Common myeloid progenitor, CD34-positive (primary cell): ENCODE measurements at regions of chr16 and their contacts with region 1.

Region 1: DNA sequence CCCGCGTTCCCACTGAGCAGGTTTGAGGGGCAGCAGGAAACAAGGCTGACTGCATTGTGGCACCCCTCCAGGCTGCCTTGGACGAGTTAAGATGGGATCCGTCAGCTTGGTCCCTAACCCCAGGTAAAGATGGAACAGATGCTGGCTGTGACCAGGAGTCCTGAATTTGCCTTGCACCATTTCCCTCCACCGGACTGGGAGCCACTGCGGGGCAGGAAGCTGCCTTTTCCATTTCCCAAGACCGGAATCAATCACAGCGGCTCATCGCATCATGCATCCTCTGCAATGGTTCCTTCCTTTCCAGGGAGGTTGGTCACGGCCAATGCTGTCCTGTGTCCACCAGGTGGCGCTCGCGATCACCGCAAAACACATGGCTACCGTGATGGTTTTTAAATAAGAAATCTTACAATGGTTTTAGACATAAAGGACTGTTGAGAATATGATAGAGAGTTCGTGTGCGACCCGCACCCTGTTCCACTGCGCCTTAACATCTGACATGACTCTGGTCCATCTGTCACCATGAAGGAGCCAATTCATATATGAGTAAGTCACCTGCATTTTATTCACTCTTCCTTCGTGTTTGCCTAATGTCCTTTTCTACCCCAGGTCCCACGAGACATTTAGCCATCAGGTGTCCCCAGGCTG is 6.8 kb upstream of the MEAK7 start:
- DNase-seq: peak; percentile 76 to 90 (median 83)
- H3K4me3 ChIP-seq: no peak overlapping the region
- H3K27ac ChIP-seq: no peak overlapping the region
- H3K4me1 ChIP-seq: peaks cover 0 to 15% (median 10%) of the 10 kb centered on the region in 4 experiments
- H3K27me3 ChIP-seq: no peaks in the 10 kb centered on the region

Region 2: DNA sequence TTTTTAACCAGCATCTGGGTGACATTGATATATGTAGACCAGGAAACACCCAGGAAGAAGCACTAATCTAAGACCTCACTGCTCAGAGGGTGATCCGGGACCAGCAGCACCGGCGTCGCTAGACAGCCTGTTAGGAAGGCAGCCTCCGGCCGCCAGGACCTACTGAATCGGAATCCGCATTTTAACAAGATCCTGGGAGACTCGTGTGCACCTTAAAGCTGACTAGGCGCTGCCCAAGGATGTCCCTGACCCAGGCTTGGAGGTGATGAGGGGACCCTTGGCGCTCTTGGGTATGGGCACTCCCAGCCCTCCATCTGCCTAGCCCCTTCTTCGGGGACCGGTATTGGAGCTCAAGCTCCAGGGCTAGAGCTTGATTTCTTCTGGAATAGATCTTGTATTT is 11.2 kb after region 1 on chr16:
- CTCF ChIA-PET with region 1: interaction called, 10 read pairs
- POLR2A ChIA-PET with region 1: no interaction called
- DNase-seq: no peak
- H3K4me3 ChIP-seq: no peak overlapping the region
- H3K27ac ChIP-seq: no peak overlapping the region
- H3K4me1 ChIP-seq: peaks cover 2 to 10% (median 6%) of the 10 kb centered on the region in 4 experiments
- H3K27me3 ChIP-seq: no peaks in the 10 kb centered on the region

Region 3: DNA sequence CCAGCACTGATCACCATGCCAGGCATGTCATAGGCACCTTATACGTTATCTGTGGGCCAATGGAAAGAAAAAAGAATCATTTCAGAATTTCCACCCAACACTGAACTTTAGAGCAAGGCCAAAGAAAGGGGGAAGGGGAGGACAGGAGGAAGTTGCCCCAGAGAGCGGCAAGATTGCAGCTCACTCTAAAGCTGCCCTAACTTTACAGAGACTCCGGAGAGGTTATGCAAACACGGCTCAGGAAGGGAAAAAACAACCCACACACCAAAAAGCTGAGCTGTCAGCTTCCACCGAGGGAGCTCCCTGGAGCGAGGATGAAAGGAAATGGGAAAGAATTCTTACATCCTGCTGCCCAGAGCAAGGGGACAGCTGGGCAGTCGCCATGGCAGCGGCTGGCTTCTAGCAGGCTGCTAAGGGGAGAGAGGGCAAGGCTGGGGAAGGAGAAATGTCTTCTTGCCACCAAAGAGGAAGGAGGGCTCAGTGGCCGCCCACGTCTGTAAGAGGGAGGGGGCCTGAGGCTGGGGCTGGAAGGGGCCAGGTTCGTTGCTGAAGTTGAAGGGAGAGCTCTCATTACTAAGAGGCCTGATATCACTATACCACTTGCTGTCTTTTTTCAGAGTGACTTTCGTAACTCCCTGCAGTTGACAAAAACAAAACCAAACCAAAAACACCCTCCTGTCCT is 88.4 kb after region 1 on chr16:
- CTCF ChIA-PET with region 1: interaction called, 15 read pairs
- POLR2A ChIA-PET with region 1: interaction called, 5 read pairs
- DNase-seq: peak; percentile 64 to 87 (median 79)
- H3K4me3 ChIP-seq: peak overlapping the region in 6 of 7 experiments; percentile 35 to 73 (median 50)
- H3K27ac ChIP-seq: peak overlapping the region; percentile 47 to 84
- H3K4me1 ChIP-seq: peaks cover 13 to 77% (median 54%) of the 10 kb centered on the region in 4 experiments
- H3K27me3 ChIP-seq: no peaks in the 10 kb centered on the region